IMR-90 (cell line): ENCODE measurements at regions of chr9 and their contacts with region 1.

Region 1: GRCh38 chr9:78035383-78035993 is 3.9 kb upstream of the GNAQ start:
- DNase-seq: peak; percentile 84
- ATAC-seq: no peak; the same call in 1 of the 2 replicates
- H3K4me3 ChIP-seq: no peak overlapping the region
- H3K27ac ChIP-seq: no peak overlapping the region
- H3K4me1 ChIP-seq: no peaks in the 10 kb centered on the region
- H3K27me3 ChIP-seq: no peaks in the 10 kb centered on the region
- CTCF ChIP-seq: peak; percentile 90
- POLR2A ChIP-seq: peak; percentile 31; the same call in 1 of the 2 replicates
- RAD21 ChIP-seq: peak; percentile 93

Region 2: GRCh38 chr9:77291714-77292113 is 743.8 kb before region 1 on chr9:
- CTCF ChIA-PET with region 1: no interaction called
- POLR2A ChIA-PET with region 1: no interaction called
- dilution Hi-C with region 1: no loop called
- in situ Hi-C with region 1: no loop called
- intact Hi-C with region 1: loop called (anchors 10 kb)
- DNase-seq: peak; percentile 33
- ATAC-seq: peak; percentile 66
- H3K4me3 ChIP-seq: no peak overlapping the region
- H3K27ac ChIP-seq: no peak overlapping the region
- H3K4me1 ChIP-seq: peaks cover 4% of the 10 kb centered on the region
- H3K27me3 ChIP-seq: no peaks in the 10 kb centered on the region
- CTCF ChIP-seq: peak; percentile 52
- POLR2A ChIP-seq: no peak
- RAD21 ChIP-seq: peak; percentile 46

Region 3: GRCh38 chr9:77456829-77457437 is 578.6 kb before region 1 on chr9:
- CTCF ChIA-PET with region 1: no interaction called
- POLR2A ChIA-PET with region 1: no interaction called
- dilution Hi-C with region 1: no loop called
- in situ Hi-C with region 1: no loop called
- intact Hi-C with region 1: loop called (anchors 5 kb)
- DNase-seq: peak; percentile 91
- ATAC-seq: peak; percentile 94
- H3K4me3 ChIP-seq: no peak overlapping the region
- H3K27ac ChIP-seq: no peak overlapping the region
- H3K4me1 ChIP-seq: no peaks in the 10 kb centered on the region
- H3K27me3 ChIP-seq: no peaks in the 10 kb centered on the region
- CTCF ChIP-seq: peak; percentile 86
- POLR2A ChIP-seq: no peak
- RAD21 ChIP-seq: peak; percentile 54

Region 4: DNA sequence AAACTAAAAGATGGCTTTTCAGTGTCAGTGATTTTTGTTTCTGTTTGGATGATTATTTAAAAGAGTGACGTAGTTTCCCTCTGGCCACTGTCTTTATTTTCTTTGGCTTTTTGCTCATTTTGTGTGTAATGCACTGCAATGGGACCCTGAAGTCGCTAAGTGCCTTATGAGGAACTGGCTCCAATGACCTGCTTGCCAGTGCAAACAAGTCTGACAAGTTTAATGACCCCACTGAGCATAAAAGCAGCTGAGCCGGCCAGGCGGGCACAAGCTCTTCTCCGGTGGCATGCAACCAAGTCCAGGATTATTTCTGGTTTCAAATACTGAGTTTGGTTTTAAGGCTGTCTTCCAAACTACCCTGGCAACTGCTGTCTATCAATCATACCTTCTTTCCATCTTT is 371.7 kb before region 1 on chr9:
- CTCF ChIA-PET with region 1: no interaction called
- POLR2A ChIA-PET with region 1: no interaction called
- dilution Hi-C with region 1: no loop called
- in situ Hi-C with region 1: no loop called
- intact Hi-C with region 1: loop called (anchors 5 kb)
- DNase-seq: peak; percentile 16
- ATAC-seq: peak; percentile 32
- H3K4me3 ChIP-seq: no peak overlapping the region
- H3K27ac ChIP-seq: no peak overlapping the region
- H3K4me1 ChIP-seq: peaks cover 2% of the 10 kb centered on the region; the same call in 1 of the 2 replicates
- H3K27me3 ChIP-seq: peaks cover 9% of the 10 kb centered on the region; the same call in 1 of the 2 replicates
- CTCF ChIP-seq: no peak
- POLR2A ChIP-seq: no peak
- RAD21 ChIP-seq: no peak

Region 5: DNA sequence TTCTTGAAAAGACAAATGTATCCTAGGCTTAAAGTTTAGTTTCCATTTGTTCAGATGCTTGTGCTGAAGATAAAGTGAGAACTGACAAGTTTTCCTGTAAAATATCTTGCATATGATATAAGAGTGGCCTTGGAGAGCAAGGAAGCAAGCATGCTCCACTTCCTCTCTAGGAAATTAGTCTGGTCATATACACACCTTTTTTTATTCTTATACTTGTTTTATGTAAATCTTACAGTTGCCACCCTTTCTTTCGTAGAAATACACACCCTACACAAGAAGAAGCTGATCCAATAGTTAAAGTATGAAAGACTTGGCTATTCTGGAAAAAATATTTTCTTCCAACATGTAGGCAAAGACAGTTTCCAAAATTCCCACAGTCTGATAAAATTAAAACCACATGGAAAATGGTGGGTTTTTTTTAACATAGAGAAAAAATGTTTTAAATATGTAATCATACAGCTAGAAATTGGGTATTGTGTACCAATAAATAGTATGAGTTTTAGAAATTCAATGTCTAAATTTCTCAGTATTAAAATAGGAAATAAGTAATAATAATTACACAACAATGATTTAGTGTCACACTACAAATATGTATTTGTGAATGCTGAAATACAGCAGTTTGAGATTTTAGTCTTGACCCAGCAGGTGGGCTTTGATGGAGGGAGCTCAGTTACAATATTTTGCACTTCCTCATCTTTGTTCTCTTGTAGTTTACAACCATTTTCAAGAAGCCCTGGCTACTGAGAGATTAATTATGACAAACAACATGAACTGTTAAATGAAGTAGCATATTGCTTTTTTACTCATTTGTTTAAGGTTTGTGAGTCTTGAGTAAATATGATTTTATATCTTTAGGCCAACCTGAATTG is 201.7 kb before region 1 on chr9:
- CTCF ChIA-PET with region 1: no interaction called
- POLR2A ChIA-PET with region 1: no interaction called
- dilution Hi-C with region 1: no loop called
- in situ Hi-C with region 1: no loop called
- intact Hi-C with region 1: no loop called
- DNase-seq: no peak
- ATAC-seq: no peak
- H3K4me3 ChIP-seq: no peak overlapping the region
- H3K27ac ChIP-seq: no peak overlapping the region
- H3K4me1 ChIP-seq: no peaks in the 10 kb centered on the region
- H3K27me3 ChIP-seq: no peaks in the 10 kb centered on the region
- CTCF ChIP-seq: no peak
- POLR2A ChIP-seq: no peak
- RAD21 ChIP-seq: no peak

Region 6: GRCh38 chr9:77847059-77847499 is 188.4 kb before region 1 on chr9:
- CTCF ChIA-PET with region 1: interaction called, 6 read pairs
- POLR2A ChIA-PET with region 1: no interaction called
- dilution Hi-C with region 1: no loop called
- in situ Hi-C with region 1: no loop called
- intact Hi-C with region 1: loop called (anchors 1 kb)
- DNase-seq: peak; percentile 45
- ATAC-seq: peak; percentile 27; the same call in 1 of the 2 replicates
- H3K4me3 ChIP-seq: no peak overlapping the region
- H3K27ac ChIP-seq: peak overlapping the region; percentile 53; the same call in 1 of the 2 replicates
- H3K4me1 ChIP-seq: peaks cover 26% of the 10 kb centered on the region
- H3K27me3 ChIP-seq: no peaks in the 10 kb centered on the region
- CTCF ChIP-seq: no peak
- POLR2A ChIP-seq: no peak
- RAD21 ChIP-seq: no peak

Region 7: DNA sequence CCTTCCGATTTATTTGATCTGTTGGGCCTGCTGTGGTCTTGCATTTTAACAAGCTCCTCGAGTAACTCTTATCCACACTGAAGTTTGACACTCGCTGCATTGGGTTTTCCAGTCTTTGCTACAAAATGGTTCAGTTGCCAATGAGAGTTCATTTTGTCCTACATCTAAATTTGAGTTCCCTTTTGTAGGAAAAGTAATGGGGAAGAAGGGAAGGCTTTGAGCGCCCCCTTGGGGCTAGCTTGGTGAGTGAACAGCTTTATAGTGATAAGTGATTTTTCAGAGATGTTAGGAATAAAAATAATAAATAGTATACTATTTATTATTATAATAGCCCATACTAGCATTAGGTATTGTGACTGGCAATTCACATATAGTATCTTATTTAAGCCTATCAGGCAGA is 86.0 kb after region 1 on chr9:
- CTCF ChIA-PET with region 1: no interaction called
- POLR2A ChIA-PET with region 1: no interaction called
- dilution Hi-C with region 1: no loop called
- in situ Hi-C with region 1: no loop called
- intact Hi-C with region 1: loop called (anchors 1 kb)
- DNase-seq: peak; percentile 58
- ATAC-seq: peak; percentile 70; the same call in 1 of the 2 replicates
- H3K4me3 ChIP-seq: no peak overlapping the region
- H3K27ac ChIP-seq: no peak overlapping the region
- H3K4me1 ChIP-seq: no peaks in the 10 kb centered on the region
- H3K27me3 ChIP-seq: peaks cover 6% of the 10 kb centered on the region
- CTCF ChIP-seq: peak; percentile 79
- POLR2A ChIP-seq: no peak
- RAD21 ChIP-seq: peak; percentile 81

Region 8: GRCh38 chr9:78428640-78429039 is 393.2 kb after region 1 on chr9:
- CTCF ChIA-PET with region 1: no interaction called
- POLR2A ChIA-PET with region 1: no interaction called
- dilution Hi-C with region 1: no loop called
- in situ Hi-C with region 1: no loop called
- intact Hi-C with region 1: no loop called
- DNase-seq: no peak
- ATAC-seq: no peak
- H3K4me3 ChIP-seq: no peak overlapping the region
- H3K27ac ChIP-seq: no peak overlapping the region
- H3K4me1 ChIP-seq: no peaks in the 10 kb centered on the region
- H3K27me3 ChIP-seq: no peaks in the 10 kb centered on the region
- CTCF ChIP-seq: no peak
- POLR2A ChIP-seq: no peak
- RAD21 ChIP-seq: no peak